IMR-90 (cell line): ENCODE measurements at regions of chr3 and their contacts with region 1.

Region 1: DNA sequence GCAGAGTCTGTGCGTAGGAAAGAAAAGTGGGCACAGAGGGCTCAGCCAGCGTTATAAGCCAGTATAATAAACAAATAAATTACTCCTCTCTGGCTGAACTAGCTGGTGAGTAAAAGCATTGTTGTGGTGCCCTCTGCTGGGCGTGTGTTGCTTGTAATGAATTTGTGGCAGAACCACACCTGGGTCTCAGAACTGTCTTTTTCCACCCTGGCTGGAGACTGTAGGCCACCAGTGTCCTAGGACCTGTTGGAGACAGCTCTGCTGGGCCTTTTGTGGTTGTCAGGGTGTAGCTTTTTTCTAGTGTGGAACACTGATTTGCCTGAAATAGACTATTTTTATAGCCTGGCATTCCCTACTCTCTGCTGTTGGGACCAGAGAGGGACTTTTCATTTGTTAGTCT is 130.5 kb upstream of the EIF1B start:
- DNase-seq: peak; percentile 62
- ATAC-seq: peak; percentile 92
- H3K4me3 ChIP-seq: no peak overlapping the region
- H3K27ac ChIP-seq: no peak overlapping the region
- H3K4me1 ChIP-seq: no peaks in the 10 kb centered on the region
- H3K27me3 ChIP-seq: no peaks in the 10 kb centered on the region
- CTCF ChIP-seq: peak; percentile 76
- POLR2A ChIP-seq: no peak
- RAD21 ChIP-seq: peak; percentile 81

Region 2: DNA sequence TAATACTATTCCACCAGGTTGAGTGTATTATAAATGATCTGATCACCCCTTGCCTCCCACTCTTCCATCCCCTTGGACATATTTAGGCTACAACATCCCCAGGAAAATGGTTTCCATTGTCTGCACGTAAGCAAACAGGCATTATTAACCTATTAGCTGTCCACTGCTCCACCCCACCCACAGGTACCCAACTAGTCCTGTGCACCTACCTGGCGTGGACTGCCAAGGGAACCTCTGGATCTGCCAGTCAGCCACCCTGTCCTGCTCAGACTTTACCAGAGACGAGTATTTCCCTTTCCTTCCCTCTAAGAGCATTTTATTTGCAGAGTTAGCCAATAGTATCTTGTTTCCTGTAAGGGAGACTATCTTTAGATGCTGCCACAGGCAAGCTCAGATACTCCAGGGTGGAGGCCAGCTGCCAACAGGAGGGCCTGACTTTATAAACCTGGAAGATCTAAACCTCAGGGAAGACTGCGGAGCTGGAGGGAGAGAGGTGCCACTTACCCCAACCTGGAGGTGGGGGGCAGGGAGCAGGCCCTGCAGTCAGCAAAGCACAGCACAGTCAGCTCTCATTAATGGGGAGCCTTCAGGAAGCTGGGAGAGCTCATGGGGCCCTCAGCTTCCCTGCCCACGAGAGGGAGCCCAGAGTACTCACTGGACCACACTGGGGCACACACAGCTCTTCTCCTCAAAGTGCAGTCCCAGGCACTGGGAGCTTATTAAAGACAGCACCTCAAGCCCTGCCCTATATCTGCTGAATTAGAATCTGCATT is 899.1 kb before region 1 on chr3 and contains the start of gene CX3CR1:
- CTCF ChIA-PET with region 1: no interaction called
- POLR2A ChIA-PET with region 1: no interaction called
- dilution Hi-C with region 1: no loop called
- in situ Hi-C with region 1: no loop called
- intact Hi-C with region 1: no loop called
- DNase-seq: no peak
- ATAC-seq: no peak; the same call in 1 of the 2 replicates
- H3K4me3 ChIP-seq: no peak within 1 kb of the TSS
- H3K27ac ChIP-seq: no peak within 1 kb of the TSS
- H3K4me1 ChIP-seq: no peaks in the 10 kb centered on the region; the same call in 1 of the 2 replicates
- H3K27me3 ChIP-seq: peaks cover 10% of the 10 kb centered on the region
- CTCF ChIP-seq: no peak
- POLR2A ChIP-seq: no peak
- RAD21 ChIP-seq: no peak
- total RNA-seq, gene CX3CR1: not detected in 2 replicates

Region 3: DNA sequence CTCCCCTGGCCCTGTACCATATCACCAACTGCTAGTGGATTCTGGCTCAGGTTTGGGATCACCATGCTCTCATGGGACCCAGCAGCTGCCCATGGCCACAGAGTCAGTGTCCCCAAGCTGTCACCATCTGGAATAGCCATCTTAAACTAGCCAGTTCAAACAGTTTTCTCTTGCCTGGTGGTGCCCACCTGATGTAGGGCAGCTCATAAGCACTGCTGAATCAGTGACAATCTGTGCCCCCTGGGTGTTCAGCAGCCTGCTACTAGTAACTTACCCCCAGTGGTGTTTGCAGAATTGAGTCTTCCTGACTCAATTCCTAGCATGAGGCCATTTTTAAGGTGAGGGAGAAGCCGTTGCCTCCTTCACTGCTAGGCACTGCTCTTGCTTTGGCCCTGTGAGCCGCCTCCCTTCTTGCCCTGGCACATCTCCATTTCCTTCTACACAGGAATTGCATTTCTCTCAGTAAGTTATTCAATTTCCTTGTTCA is 764.6 kb before region 1 on chr3:
- CTCF ChIA-PET with region 1: no interaction called
- POLR2A ChIA-PET with region 1: no interaction called
- dilution Hi-C with region 1: no loop called
- in situ Hi-C with region 1: no loop called
- intact Hi-C with region 1: loop called (anchors 1 kb)
- DNase-seq: no peak
- ATAC-seq: peak; percentile 4; the same call in 1 of the 2 replicates
- H3K4me3 ChIP-seq: no peak overlapping the region
- H3K27ac ChIP-seq: no peak overlapping the region
- H3K4me1 ChIP-seq: no peaks in the 10 kb centered on the region
- H3K27me3 ChIP-seq: no peaks in the 10 kb centered on the region
- CTCF ChIP-seq: no peak
- POLR2A ChIP-seq: no peak; the same call in 1 of the 2 replicates
- RAD21 ChIP-seq: no peak

Region 4: DNA sequence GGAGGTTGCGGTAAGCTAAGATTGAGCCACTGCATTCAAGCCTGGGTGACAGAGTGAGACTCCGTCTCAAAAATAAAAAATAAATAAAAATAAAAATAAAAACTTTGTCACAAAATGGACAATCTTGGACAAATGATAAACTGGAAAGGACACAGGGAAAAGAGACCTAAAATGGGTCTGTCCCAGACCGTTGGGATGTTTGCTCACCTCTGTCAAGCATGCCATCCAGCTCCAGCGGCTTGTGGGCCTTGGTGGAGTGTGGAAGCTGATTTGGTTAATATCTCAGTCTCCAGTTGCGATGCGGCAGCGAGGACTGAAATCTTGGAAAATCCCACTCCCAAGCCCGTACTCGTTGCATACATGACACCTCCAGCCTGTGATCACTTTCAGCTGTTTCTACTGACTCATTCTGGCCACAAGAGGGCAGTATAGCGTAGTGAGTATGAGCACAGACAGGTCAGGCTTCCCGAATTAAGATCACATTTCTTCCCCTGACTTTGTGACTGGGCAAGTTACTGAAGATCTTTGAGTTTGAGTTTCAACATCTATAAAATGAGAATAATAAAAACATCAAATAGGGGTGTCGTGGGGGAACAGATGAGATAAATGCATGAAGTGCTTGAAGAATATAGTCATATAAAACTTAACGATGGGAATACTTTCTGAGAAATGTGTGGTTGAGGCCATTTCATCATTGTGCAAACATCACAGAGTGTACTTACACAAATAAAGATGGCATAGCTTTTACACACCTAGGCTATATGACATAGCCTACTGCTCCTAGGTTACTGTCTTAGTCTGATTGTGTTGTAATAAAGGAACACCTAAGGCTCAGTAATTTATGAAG is 731.2 kb before region 1 on chr3:
- CTCF ChIA-PET with region 1: interaction called, 5 read pairs
- POLR2A ChIA-PET with region 1: no interaction called
- dilution Hi-C with region 1: no loop called
- in situ Hi-C with region 1: no loop called
- intact Hi-C with region 1: loop called (anchors 1 kb)
- DNase-seq: peak; percentile 82
- ATAC-seq: peak; percentile 100
- H3K4me3 ChIP-seq: no peak overlapping the region
- H3K27ac ChIP-seq: no peak overlapping the region
- H3K4me1 ChIP-seq: no peaks in the 10 kb centered on the region
- H3K27me3 ChIP-seq: peaks cover 6% of the 10 kb centered on the region; the same call in 1 of the 2 replicates
- CTCF ChIP-seq: peak; percentile 87
- POLR2A ChIP-seq: no peak
- RAD21 ChIP-seq: peak; percentile 65

Region 5: DNA sequence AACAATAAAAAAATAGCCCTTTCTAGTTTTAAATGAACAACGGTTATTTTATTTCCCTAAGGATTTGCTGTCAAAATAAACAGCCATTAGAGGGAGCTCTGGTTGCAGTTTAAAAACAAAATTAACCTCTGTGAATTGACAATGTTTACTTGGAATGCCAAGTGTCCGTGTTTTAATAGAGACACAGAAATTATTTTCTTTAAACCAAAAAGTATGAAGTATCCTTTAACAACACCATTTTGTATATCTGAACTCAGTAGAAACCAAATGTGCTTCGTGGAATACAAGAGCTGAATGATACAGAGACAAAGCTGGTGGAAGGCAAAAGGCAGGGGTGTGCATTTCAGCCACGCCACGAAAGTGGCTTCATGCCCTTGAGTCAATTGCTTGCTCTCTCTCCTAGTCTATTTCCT is 637.1 kb before region 1 on chr3:
- CTCF ChIA-PET with region 1: interaction called, 17 read pairs
- POLR2A ChIA-PET with region 1: no interaction called
- dilution Hi-C with region 1: no loop called
- in situ Hi-C with region 1: loop called (anchors 5 kb)
- intact Hi-C with region 1: loop called (anchors 1 kb)
- DNase-seq: peak; percentile 8
- ATAC-seq: peak; percentile 53; the same call in 1 of the 2 replicates
- H3K4me3 ChIP-seq: no peak overlapping the region
- H3K27ac ChIP-seq: no peak overlapping the region
- H3K4me1 ChIP-seq: no peaks in the 10 kb centered on the region
- H3K27me3 ChIP-seq: no peaks in the 10 kb centered on the region
- CTCF ChIP-seq: peak; percentile 67
- POLR2A ChIP-seq: no peak
- RAD21 ChIP-seq: peak; percentile 60

Region 6: GRCh38 chr3:39548282-39548681 is 630.7 kb before region 1 on chr3:
- CTCF ChIA-PET with region 1: no interaction called
- POLR2A ChIA-PET with region 1: no interaction called
- dilution Hi-C with region 1: no loop called
- in situ Hi-C with region 1: loop called (anchors 5 kb)
- intact Hi-C with region 1: no loop called
- DNase-seq: no peak
- ATAC-seq: no peak
- H3K4me3 ChIP-seq: no peak overlapping the region
- H3K27ac ChIP-seq: no peak overlapping the region
- H3K4me1 ChIP-seq: no peaks in the 10 kb centered on the region
- H3K27me3 ChIP-seq: no peaks in the 10 kb centered on the region
- CTCF ChIP-seq: no peak
- POLR2A ChIP-seq: no peak
- RAD21 ChIP-seq: no peak

Region 7: GRCh38 chr3:39707314-39707909 is 471.6 kb before region 1 on chr3:
- CTCF ChIA-PET with region 1: no interaction called
- POLR2A ChIA-PET with region 1: no interaction called
- dilution Hi-C with region 1: no loop called
- in situ Hi-C with region 1: no loop called
- intact Hi-C with region 1: loop called (anchors 2 kb)
- DNase-seq: peak; percentile 10
- ATAC-seq: peak; percentile 42; the same call in 1 of the 2 replicates
- H3K4me3 ChIP-seq: no peak overlapping the region
- H3K27ac ChIP-seq: no peak overlapping the region
- H3K4me1 ChIP-seq: no peaks in the 10 kb centered on the region
- H3K27me3 ChIP-seq: no peaks in the 10 kb centered on the region
- CTCF ChIP-seq: peak; percentile 53
- POLR2A ChIP-seq: no peak
- RAD21 ChIP-seq: no peak

Region 8: DNA sequence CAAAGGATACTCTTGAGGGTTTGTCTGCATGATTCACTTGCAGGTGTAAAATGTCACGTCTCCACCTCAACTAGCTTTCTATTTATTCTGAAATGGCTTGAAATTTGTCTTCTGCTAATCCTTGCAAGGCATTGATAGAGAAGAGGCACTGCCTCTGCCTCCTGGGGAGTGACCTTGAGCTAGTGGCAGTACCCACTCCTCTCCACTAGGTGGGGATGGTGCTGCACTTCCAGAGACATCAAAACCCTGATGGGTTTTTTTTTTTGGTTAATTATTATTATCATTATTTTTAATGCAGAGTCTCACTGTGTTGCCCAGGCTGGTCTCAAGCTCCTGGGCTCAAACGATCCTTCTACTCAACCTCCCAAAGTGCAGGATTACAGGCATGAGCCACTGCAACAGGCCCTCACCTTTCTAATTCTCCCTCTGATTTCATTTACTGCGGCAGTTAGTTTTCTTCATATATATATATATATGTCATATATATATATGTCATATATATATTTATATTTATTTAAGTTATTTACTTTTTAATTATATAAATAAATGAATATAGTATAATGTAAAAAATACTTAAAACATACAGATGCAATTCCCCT is 12.9 kb after region 1 on chr3:
- CTCF ChIA-PET with region 1: interaction called, 14 read pairs
- POLR2A ChIA-PET with region 1: no interaction called
- dilution Hi-C with region 1: no loop called
- in situ Hi-C with region 1: no loop called
- intact Hi-C with region 1: no loop called
- DNase-seq: peak; percentile 51
- ATAC-seq: peak; percentile 99
- H3K4me3 ChIP-seq: no peak overlapping the region
- H3K27ac ChIP-seq: no peak overlapping the region
- H3K4me1 ChIP-seq: no peaks in the 10 kb centered on the region
- H3K27me3 ChIP-seq: no peaks in the 10 kb centered on the region; the same call in 1 of the 2 replicates
- CTCF ChIP-seq: peak; percentile 89
- POLR2A ChIP-seq: no peak
- RAD21 ChIP-seq: peak; percentile 85